ENCODE measurements at regions of chr15 and their contacts with region 1.

Region 1: DNA sequence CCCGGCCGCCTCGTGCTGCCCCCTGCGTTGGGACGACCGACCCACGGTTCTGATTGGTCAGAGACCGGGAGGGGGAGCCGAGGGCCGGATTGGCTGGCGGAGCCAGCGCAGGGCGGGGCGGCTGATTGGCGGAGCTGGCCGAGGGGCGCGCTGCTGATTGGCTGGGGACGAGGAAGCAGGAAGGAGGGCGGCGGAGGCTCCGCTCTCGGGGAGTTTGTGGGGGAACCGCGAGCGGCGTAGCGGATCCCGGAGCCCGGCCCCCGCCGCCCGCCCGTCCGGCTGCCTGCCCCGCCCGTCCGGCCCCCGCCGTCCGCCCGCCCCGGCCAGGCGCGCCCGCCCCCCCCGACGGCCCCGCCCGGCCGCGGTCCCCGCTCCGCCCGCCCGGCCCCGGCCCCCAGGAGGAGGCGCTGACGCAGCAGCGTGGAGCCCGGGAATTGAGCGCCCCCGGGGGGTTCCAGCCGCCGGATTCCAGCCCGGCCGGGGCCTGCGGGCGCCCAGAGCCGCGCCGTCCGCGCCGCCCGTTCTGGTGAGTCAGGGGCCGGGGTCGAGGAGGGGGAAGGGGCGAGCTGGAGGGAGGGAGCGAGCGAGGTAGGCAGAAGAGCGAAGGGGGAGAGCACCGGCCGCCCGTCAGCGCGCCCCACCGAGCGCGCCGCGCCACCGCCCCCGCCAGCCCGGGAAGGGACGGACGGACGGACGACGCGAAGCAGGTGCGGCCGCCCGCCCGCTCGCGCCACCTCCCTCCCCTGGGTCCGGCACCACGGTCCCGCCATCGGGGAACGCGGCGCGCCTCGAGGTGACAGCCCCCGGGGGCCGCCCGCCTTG is at the start of gene BAHD1:
- DNase-seq: peak; percentile 98 to 99 (median 99)
- H3K4me3 ChIP-seq: peak within 1 kb of the TSS; percentile 83
- H3K27ac ChIP-seq: peak within 1 kb of the TSS; percentile 78 to 85
- H3K4me1 ChIP-seq: peaks cover 21% of the 10 kb centered on the region
- H3K27me3 ChIP-seq: no peaks in the 10 kb centered on the region
- CTCF ChIP-seq: peak in 1 of 3 donors; percentile 6
- EP300 ChIP-seq: no peak
- POLR2A ChIP-seq: peak; percentile 33
- total RNA-seq, gene BAHD1: 16.0 to 67.3 (median 45.7) TPM

Region 2: DNA sequence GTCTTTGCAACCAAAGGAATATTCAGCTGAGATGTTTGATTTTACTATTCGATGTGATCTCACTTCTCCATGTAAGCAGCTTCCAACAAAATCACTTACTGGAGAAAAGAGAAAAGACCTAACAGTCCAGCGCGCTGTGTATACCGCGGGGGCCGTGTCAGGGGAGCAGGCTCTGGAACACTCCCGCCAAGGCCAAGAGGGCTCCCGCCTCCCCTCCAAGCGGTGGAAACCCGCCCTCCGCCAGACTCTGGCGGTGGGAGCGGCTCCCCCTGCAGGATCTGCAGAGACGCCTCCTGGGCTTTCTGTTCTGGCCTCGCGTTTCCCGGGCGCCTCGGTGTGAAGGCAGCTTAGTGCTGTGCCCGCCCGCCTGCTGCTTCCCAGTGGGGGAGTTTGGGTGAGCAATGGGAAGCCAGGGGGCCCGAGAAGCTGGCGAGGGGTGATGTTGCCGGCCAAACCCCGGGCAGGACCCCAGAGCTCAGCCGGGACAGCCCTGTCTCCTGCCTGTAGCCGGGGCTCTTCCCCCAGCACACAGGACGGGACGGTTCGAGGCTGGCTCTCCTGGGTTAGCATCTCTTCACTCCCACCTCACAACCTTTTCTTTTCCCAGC is 66.1 kb after region 1 on chr15:
- intact Hi-C with region 1: loop called in 1 of 4 experiments (anchors 5 kb)
- DNase-seq: peak; percentile 90 to 93 (median 90)
- H3K4me3 ChIP-seq: peak overlapping the region; percentile 24
- H3K27ac ChIP-seq: peak overlapping the region in 1 of 2 donors; percentile 76
- H3K4me1 ChIP-seq: peaks cover 9% of the 10 kb centered on the region
- H3K27me3 ChIP-seq: no peaks in the 10 kb centered on the region
- CTCF ChIP-seq: peak; percentile 69 to 84 (median 78)
- EP300 ChIP-seq: no peak
- POLR2A ChIP-seq: peak; percentile 17

Region 3: GRCh38 chr15:40564591-40565332 is 123.8 kb after region 1 on chr15 and contains the start of gene CCDC32:
- intact Hi-C with region 1: loop called in 1 of 4 experiments (anchors 10 kb)
- DNase-seq: peak; percentile 94 to 97 (median 95)
- H3K4me3 ChIP-seq: peak within 1 kb of the TSS; percentile 88
- H3K27ac ChIP-seq: peak within 1 kb of the TSS; percentile 79 to 85
- H3K4me1 ChIP-seq: peaks cover 4% of the 10 kb centered on the region
- H3K27me3 ChIP-seq: no peaks in the 10 kb centered on the region
- CTCF ChIP-seq: no peak
- EP300 ChIP-seq: peak; percentile 37
- POLR2A ChIP-seq: peak; percentile 81
- total RNA-seq, gene CCDC32: 21.0 to 57.6 (median 31.0) TPM